Activated naive CD4-positive, alpha-beta T cell treated with anti-CD3 and anti-CD28 coated beads, Interleukin-2, amount 10 ng/mL, durations not matched to agents 7 days and 5 days (primary cell): ENCODE measurements at regions of chr12 and their contacts with region 1.

Region 1: DNA sequence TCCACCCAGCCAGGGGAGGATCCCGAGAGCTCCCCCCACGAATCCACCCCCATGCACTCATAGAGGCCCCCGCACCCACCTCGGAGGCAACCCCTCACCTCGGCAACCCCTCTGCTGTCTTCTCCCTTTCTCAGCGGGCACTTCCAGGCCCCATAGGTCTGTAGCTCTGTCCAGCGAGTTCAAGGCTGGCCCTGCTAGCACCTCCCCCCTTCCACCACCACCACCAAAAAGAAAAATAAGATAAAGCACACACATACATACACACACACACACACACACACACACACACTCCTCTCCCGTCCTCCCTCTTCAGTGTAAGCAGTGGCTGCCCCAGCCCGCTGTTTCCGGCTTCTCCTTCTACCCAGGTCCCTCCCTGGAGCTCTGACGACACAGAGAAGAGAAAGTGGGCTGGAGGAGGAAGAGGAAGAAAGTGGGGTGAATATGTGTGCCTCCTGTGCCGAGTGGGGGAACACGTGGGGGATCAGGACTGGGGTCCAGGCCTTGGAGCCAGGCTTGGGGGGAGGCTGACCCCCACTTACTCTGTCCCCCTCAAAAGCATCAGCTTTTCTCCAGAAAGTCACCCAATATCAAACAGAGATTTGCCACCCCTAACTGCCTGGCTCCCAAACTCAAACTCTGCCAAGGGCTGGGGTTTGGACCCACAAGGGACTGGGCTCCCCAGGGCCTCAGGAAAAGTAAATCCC is at the start of gene STAT6:
- DNase-seq: peak; percentile 94
- H3K4me3 Mint-ChIP-seq: peak within 1 kb of the TSS; percentile 82
- H3K27ac Mint-ChIP-seq: peak within 1 kb of the TSS; percentile 94
- H3K4me1 Mint-ChIP-seq: peaks cover 50% of the 10 kb centered on the region
- H3K27me3 Mint-ChIP-seq: peaks cover 5% of the 10 kb centered on the region

Region 2: GRCh38 chr12:57063991-57064685 is 47.0 kb before region 1 on chr12:
- CTCF ChIA-PET with region 1: interaction called, 116 read pairs
- DNase-seq: peak; percentile 72
- H3K4me3 Mint-ChIP-seq: peak overlapping the region; percentile 67
- H3K27ac Mint-ChIP-seq: peak overlapping the region; percentile 97
- H3K4me1 Mint-ChIP-seq: peaks cover 39% of the 10 kb centered on the region
- H3K27me3 Mint-ChIP-seq: no peaks in the 10 kb centered on the region

Region 3: DNA sequence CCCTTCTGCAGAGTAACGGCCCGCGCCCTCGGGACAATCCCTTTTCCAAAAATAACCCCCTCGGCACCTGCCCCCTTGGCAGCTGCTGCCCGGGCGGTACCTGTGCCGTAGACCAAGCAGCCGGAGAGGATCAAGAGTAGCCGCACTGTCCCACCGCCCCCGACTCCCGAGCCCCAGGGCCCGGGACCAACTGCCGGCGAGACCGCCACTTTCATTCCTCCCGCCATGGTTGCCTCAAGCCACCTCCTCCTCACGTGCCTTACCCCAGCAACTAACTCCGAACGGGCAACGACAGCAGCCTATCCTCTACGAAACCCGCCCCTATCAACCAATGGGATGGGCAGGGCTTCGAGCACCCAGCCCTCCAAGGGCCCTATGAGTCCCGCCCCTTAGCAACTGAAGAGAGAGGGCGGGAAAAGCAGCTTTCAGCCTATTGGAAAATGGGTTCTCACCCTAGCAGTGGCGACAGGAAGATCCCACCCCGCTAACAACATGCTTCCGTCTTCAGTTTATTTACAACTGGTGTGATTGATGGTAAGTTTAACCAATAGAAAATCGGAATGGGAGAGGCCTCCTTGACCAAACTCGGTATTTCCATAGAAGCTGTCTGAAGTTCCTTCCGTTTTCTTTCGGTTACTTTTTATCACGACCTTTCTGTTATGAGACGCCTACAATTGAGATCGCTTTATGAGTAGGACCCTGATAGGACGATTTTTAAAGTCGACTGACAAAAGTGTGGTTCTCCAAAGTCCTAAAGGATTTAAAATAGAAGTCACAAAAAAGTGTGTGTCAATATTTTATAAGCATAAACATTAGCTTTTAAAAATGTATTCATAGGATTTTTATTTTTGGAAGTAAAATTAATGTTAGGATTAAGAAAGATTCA is 32.4 kb before region 1 on chr12 and contains the start of gene NEMP1:
- CTCF ChIA-PET with region 1: interaction called, 116 read pairs
- DNase-seq: peak; percentile 98
- H3K4me3 Mint-ChIP-seq: peak within 1 kb of the TSS; percentile 79
- H3K27ac Mint-ChIP-seq: peak within 1 kb of the TSS; percentile 97
- H3K4me1 Mint-ChIP-seq: peaks cover 36% of the 10 kb centered on the region
- H3K27me3 Mint-ChIP-seq: no peaks in the 10 kb centered on the region

Region 4: GRCh38 chr12:57124259-57124877 is 13.2 kb after region 1 on chr12:
- CTCF ChIA-PET with region 1: interaction called, 40 read pairs
- DNase-seq: peak; percentile 85
- H3K4me3 Mint-ChIP-seq: no peak overlapping the region
- H3K27ac Mint-ChIP-seq: no peak overlapping the region
- H3K4me1 Mint-ChIP-seq: peaks cover 11% of the 10 kb centered on the region
- H3K27me3 Mint-ChIP-seq: peaks cover 57% of the 10 kb centered on the region